Psoas muscle (tissue), 8 donors: ENCODE measurements at regions of chr1 and their contacts with region 1.

Region 1: DNA sequence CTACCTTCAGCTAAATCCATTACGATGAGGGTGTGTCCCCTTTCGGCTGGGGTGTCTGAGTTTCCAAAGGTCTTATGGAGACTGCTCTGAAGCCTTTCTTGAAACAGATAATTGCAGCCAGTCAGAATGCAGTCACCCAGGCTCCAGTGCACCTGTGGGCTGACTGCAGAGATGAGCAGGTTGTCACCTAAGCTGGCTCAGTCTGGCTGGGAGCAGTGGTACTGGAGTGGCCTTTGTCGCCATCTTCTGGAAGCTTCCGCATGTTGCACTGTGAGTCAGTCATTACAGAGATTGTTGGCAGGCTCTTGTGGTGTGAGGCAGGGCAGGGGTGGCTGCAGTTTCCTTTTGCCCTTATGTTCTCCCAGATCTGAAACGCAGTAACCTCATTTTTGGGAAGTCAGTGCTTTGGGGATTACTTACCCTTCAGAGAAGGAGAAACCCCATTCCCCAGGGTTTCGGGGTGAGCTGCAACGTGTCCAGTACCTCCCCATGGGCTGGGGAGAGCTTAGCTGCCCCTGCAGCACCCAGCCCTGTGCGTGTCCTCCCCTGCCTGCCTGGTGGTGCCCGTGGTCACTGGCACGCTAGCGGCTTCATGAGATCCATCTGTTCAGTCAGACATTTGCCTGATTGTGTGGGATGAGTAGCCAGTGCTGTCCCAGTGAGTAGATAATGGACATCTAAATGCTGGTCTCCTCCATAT is 48.0 kb downstream of the SMYD2 start:
- DNase-seq: peak; percentile 79 to 89
- ATAC-seq: peak; percentile 95 to 96 (median 95)
- H3K4me3 ChIP-seq: no peak overlapping the region
- H3K27ac ChIP-seq: no peak overlapping the region
- H3K4me1 ChIP-seq: peaks cover 3% of the 10 kb centered on the region
- H3K27me3 ChIP-seq: no peaks in the 10 kb centered on the region
- CTCF ChIP-seq: peak; percentile 94

Region 2: DNA sequence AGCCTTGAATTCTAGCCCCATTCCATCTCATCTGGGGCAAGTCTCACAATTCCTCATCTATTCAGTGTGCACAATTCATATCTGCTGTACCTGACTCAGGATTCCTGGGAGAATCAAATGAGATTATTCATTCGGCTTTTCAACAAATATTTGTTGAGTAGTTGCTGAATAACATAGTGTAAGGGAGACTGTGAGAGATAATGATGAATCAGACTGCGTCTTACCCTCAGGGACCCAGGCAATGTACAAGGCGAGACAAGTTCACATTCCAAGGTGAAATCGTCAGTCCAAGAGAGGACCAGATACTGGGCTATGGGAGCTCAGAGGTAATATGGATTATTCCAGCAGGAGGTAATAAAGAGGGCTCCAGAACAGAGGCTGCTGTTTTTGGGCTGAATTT is 115.8 kb before region 1 on chr1:
- intact Hi-C with region 1: loop called (anchors 1 to 2 kb)
- DNase-seq: no peak
- ATAC-seq: no peak
- H3K4me3 ChIP-seq: no peak overlapping the region
- H3K27ac ChIP-seq: no peak overlapping the region
- H3K4me1 ChIP-seq: peaks cover 7% of the 10 kb centered on the region
- H3K27me3 ChIP-seq: peaks cover 0 to 2% (median 0%) of the 10 kb centered on the region in 3 donors
- CTCF ChIP-seq: no peak

Region 3: GRCh38 chr1:214261206-214262123 is 67.5 kb before region 1 on chr1:
- intact Hi-C with region 1: loop called (anchors 1 to 2 kb)
- DNase-seq: peak; percentile 84 to 94
- ATAC-seq: peak; percentile 96 to 98 (median 97)
- H3K4me3 ChIP-seq: peak overlapping the region; percentile 49
- H3K27ac ChIP-seq: peak overlapping the region; percentile 89
- H3K4me1 ChIP-seq: peaks cover 15% of the 10 kb centered on the region
- H3K27me3 ChIP-seq: no peaks in the 10 kb centered on the region
- CTCF ChIP-seq: peak; percentile 97

Region 4: GRCh38 chr1:214416417-214416816 is 87.5 kb after region 1 on chr1:
- intact Hi-C with region 1: no loop called
- DNase-seq: no peak
- ATAC-seq: peak in 3 of 4 donors; percentile 62 to 74 (median 72)
- H3K4me3 ChIP-seq: no peak overlapping the region
- H3K27ac ChIP-seq: peak overlapping the region; percentile 48
- H3K4me1 ChIP-seq: peaks cover 60% of the 10 kb centered on the region
- H3K27me3 ChIP-seq: no peaks in the 10 kb centered on the region
- CTCF ChIP-seq: no peak

Region 5: GRCh38 chr1:214584805-214585766 is 256.2 kb after region 1 on chr1:
- intact Hi-C with region 1: loop called (anchors 2 to 5 kb)
- DNase-seq: no peak
- ATAC-seq: peak in 3 of 4 donors; percentile 33 to 71 (median 60)
- H3K4me3 ChIP-seq: no peak overlapping the region
- H3K27ac ChIP-seq: no peak overlapping the region
- H3K4me1 ChIP-seq: peaks cover 33% of the 10 kb centered on the region
- H3K27me3 ChIP-seq: no peaks in the 10 kb centered on the region
- CTCF ChIP-seq: peak; percentile 66

Region 6: GRCh38 chr1:214632091-214632490 is 303.2 kb after region 1 on chr1:
- intact Hi-C with region 1: loop called in 1 of 2 experiments (anchors 2 kb)
- DNase-seq: no peak
- ATAC-seq: no peak
- H3K4me3 ChIP-seq: no peak overlapping the region
- H3K27ac ChIP-seq: no peak overlapping the region
- H3K4me1 ChIP-seq: peaks cover 3% of the 10 kb centered on the region
- H3K27me3 ChIP-seq: no peaks in the 10 kb centered on the region
- CTCF ChIP-seq: no peak